ENCODE measurements at regions of chr19 and their contacts with region 1.

Region 1: DNA sequence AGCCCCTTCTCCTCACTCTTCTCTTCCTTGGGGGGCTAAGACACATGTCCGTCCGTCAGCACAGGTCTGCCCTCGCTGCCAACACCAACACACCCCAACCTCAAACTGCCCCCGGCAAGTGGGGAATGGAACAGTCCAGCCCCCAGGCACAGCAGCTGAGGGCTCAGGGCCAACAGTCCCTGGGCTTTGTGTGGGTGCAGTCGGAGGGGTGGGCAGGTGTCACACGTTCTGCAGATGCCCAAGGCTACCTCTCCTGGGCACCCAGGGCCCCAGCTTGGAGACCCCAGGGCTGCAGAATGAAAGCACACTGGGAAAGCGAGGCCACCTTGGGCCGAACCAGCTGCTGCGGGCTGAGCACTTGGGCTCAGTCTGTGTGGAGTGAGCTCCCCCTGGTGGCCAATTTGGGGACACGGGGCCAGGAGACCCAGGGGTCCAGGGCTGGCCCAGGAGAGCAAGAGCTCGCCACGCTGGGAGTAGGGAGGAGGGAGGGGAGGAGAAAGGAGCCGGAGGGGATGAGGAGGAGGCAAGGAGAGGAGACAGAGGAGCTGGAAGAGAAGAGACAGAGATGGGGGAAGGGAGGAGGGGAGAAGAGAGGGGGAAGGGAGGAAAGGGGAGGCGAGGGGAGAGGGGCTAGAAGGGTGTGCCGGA is 14.0 kb upstream of the ATP8B3 start:
- DNase-seq: peak; percentile 88
- H3K4me3 ChIP-seq: no peak overlapping the region
- H3K27ac ChIP-seq: no peak overlapping the region
- H3K4me1 ChIP-seq: peaks cover 0 to 29% (median 20%) of the 10 kb centered on the region in 4 donors
- H3K27me3 ChIP-seq: no peaks in the 10 kb centered on the region
- CTCF ChIP-seq: peak; percentile 84 to 94 (median 88)
- EP300 ChIP-seq: no peak
- POLR2A ChIP-seq: no peak

Region 2: DNA sequence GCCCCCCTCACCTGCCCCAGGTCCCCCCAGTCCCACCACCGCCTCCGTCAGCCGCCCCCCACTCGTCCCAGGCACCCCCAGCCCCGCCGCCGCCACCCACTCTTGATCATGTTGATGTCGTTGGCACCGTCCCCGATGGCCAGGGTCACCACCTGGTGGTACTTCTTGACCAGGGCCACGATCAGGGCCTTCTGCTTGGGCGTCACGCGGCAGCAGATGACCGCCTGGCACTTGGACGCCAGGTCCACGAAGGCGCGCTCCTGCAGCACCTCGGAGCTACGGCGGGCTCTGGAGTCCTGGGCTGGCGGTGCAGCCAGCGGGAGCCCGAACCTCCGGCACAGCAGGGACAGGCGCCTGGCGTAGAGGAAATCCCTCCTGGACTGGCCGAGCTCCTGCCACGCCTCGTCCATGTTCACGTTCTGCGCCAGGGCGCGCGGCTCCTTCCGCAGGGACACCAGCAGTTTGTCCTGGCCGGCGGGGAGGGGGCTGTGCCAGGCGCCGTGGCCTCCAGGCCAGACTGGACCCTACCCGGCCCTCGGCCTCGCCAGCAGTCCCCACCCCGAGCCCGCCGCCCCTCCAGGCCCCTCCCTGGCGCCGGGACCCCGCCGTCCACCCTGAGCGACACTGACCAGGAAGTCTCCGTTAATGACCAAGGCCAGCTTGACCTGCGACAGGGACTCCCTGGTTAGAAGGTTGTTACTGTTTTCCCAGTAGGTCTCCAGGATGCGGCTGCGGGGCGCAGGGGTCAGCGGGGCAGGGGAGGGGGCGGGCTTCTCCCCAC is 36.6 kb before region 1 on chr19:
- intact Hi-C with region 1: loop called (anchors 1 kb)
- DNase-seq: no peak
- H3K4me3 ChIP-seq: peak overlapping the region in 1 of 4 donors; percentile 28
- H3K27ac ChIP-seq: no peak overlapping the region
- H3K4me1 ChIP-seq: peaks cover 0 to 12% (median 3%) of the 10 kb centered on the region in 4 donors
- H3K27me3 ChIP-seq: peaks cover 0 to 65% (median 33%) of the 10 kb centered on the region in 3 donors
- CTCF ChIP-seq: no peak
- EP300 ChIP-seq: no peak
- POLR2A ChIP-seq: no peak

Region 3: GRCh38 chr19:1848399-1849131 is 22.5 kb after region 1 on chr19 and contains the start of gene REXO1:
- intact Hi-C with region 1: no loop called
- DNase-seq: peak; percentile 96
- H3K4me3 ChIP-seq: peak within 1 kb of the TSS; percentile 92 to 100 (median 100)
- H3K27ac ChIP-seq: peak within 1 kb of the TSS; percentile 95 to 98 (median 97)
- H3K4me1 ChIP-seq: peaks cover 0 to 68% (median 55%) of the 10 kb centered on the region in 4 donors
- H3K27me3 ChIP-seq: peaks cover 4 to 22% (median 10%) of the 10 kb centered on the region in 3 donors
- CTCF ChIP-seq: peak; percentile 72 to 94 (median 89)
- EP300 ChIP-seq: no peak
- POLR2A ChIP-seq: no peak
- total RNA-seq, gene REXO1: 8.6 to 61.8 (median 13.1) TPM